WTC11 (cell line): ENCODE measurements at regions of chr3 and their contacts with region 1.

Region 1: GRCh38 chr3:160449636-160450598 is at the start of gene TRIM59:
- DNase-seq: peak; percentile 99
- ATAC-seq: peak; percentile 90
- H3K4me3 Mint-ChIP-seq: peak within 1 kb of the TSS; percentile 91
- H3K27ac Mint-ChIP-seq: peak within 1 kb of the TSS; percentile 96
- H3K4me1 Mint-ChIP-seq: peaks cover 28% of the 10 kb centered on the region
- H3K27me3 Mint-ChIP-seq: peaks cover 2% of the 10 kb centered on the region; the same call in 1 of the 2 replicates
- CTCF ChIP-seq: no peak
- total RNA-seq, gene TRIM59: 32.4 to 38.5 TPM (median 36.8 TPM) in 3 replicates

Region 2: DNA sequence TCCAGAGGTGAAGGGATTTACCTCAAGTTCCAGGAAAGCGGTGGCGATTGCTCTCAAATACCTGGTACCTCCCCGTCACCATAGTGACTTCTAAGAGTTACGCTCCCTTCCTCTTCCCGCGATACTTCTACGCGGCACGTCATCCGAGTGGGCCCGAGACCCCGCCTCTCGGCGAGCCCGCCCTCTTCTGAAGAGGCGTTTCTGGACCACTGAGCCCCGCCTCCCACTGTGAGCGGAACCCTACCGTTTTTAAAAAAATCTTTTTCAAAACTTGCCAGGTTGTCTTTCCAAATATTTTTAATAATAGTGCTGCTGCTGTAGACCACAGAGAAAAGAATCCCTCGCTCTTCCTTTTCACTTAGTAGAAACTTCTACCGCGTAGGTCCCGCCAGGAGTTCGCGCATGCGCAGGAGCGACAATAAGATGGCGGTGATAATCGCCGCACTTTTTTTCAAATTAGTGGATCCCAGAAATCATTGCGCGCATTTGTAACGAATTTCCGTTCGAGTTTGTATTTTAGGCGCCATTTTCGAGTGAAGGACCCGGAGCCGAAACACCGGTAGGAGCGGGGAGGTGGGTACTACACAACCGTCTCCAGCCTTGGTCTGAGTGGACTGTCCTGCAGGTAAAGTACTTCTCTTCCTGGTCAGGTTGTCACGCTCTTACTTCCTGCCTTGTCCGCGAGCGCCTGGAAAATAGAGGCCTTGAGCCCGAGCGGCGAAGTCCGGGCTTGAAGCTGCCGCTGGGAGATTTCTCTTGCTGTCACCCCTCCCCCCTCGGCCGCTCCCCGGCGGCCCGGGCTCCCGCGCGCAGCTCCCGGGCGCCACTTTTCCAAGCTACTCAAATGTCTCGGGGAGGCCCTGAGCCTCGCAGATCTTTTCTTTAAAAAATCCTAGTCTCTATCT is 50.5 kb before region 1 on chr3 and contains the starts of genes IFT80 and SMC4:
- CTCF ChIA-PET with region 1: interaction called, 3 read pairs
- POLR2A ChIA-PET with region 1: interaction called, 25 read pairs
- DNase-seq: peak; percentile 96
- ATAC-seq: peak; percentile 96
- H3K4me3 Mint-ChIP-seq: peak within 1 kb of the TSS; percentile 99
- H3K27ac Mint-ChIP-seq: peak within 1 kb of the TSS; percentile 99
- H3K4me1 Mint-ChIP-seq: peaks cover 36% of the 10 kb centered on the region
- H3K27me3 Mint-ChIP-seq: peaks cover 8% of the 10 kb centered on the region; the same call in 1 of the 2 replicates
- CTCF ChIP-seq: no peak
- total RNA-seq, gene IFT80: 26.9 to 29.5 TPM (median 28.0 TPM) in 3 replicates
- total RNA-seq, gene SMC4: 115 to 144 TPM (median 125 TPM) in 3 replicates

Region 3: DNA sequence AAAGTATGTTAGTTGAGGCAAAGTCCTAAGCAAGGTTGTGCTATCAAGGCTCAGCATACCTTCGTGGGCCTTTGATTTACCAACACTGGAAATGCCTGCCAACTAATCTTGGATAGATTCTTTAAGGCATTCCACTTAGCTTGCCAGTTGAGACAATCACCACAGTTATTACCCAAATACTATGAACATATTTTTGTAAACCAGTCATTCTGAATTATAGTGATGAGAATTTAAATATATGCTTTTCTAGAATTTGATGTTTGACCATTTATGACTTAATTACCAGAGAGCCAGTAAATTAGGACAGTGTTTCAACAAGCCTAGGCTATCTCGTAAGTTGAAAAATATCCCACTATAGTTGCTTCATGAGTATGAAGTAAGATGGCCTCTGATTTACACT is 15.8 kb before region 1 on chr3:
- CTCF ChIA-PET with region 1: interaction called, 5 read pairs
- POLR2A ChIA-PET with region 1: interaction called, 12 read pairs
- DNase-seq: no peak
- ATAC-seq: no peak
- H3K4me3 Mint-ChIP-seq: no peak overlapping the region
- H3K27ac Mint-ChIP-seq: no peak overlapping the region
- H3K4me1 Mint-ChIP-seq: peaks cover 8% of the 10 kb centered on the region; the same call in 1 of the 2 replicates
- H3K27me3 Mint-ChIP-seq: no peaks in the 10 kb centered on the region
- CTCF ChIP-seq: no peak

Region 4: GRCh38 chr3:160464321-160464720 is 14.4 kb after region 1 on chr3:
- CTCF ChIA-PET with region 1: interaction called, 4 read pairs
- POLR2A ChIA-PET with region 1: interaction called, 12 read pairs
- DNase-seq: no peak
- ATAC-seq: no peak
- H3K4me3 Mint-ChIP-seq: no peak overlapping the region
- H3K27ac Mint-ChIP-seq: no peak overlapping the region
- H3K4me1 Mint-ChIP-seq: peaks cover 5% of the 10 kb centered on the region; the same call in 1 of the 2 replicates
- H3K27me3 Mint-ChIP-seq: peaks cover 36% of the 10 kb centered on the region
- CTCF ChIP-seq: no peak

Region 5: DNA sequence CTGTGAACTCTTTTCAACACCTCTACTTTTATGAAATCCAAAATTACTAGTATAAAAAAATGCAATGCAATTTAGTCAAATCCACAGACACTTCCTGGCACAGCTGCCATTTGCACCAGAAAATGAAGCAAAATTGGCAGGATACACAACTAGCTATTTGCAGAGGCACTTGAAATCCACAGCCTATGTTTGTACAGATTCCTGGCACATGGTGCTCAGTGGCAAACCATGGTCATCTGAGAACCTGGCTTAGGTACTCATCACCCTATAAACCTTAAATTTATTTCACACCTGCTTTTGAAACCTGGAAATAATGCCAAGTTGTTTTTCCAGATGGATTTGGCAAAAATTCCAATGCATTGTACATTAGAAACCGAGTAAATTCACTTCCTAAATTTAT is 285.9 kb after region 1 on chr3:
- CTCF ChIA-PET with region 1: no interaction called
- POLR2A ChIA-PET with region 1: no interaction called
- DNase-seq: no peak
- ATAC-seq: no peak
- H3K4me3 Mint-ChIP-seq: no peak overlapping the region
- H3K27ac Mint-ChIP-seq: no peak overlapping the region
- H3K4me1 Mint-ChIP-seq: peaks cover 14% of the 10 kb centered on the region
- H3K27me3 Mint-ChIP-seq: no peaks in the 10 kb centered on the region
- CTCF ChIP-seq: no peak